Heart right ventricle (tissue), 16 donors: ENCODE measurements at regions of chr15 and their contacts with region 1.

Region 1: DNA sequence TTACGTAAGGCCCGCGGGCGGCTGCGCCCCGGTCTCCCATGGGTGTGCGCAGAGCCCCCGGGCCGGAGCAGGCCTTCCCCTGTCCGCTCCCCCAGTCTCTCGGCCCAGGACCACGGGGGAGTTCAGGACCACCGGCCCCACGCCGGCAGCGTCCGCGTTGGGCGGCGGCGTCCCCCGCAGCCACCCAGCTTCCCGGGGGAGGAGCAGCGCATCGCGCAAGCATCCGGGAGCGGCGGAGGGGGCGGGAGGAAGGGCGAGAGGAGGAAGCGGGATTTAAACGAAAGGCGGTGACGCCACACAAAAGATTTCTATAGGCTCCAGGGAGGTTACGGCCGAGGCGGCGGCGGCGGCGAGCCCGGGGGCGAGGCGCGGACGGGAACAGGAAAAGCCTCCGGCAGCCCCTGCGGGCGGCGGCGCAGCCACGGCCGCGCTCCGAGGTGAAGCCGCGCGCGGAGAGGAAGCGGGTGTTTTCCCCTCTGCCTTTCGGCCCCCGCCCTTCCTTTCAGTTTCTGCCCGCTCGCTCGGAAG is at the start of gene TLNRD1:
- DNase-seq: peak; percentile 88 to 93
- ATAC-seq: peak; percentile 81 to 93 (median 84)
- H3K4me3 ChIP-seq: peak within 1 kb of the TSS; percentile 34 to 98 (median 88)
- H3K27ac ChIP-seq: peak within 1 kb of the TSS; percentile 93 to 100 (median 99)
- H3K4me1 ChIP-seq: peaks cover 3 to 56% (median 42%) of the 10 kb centered on the region in 9 donors
- H3K27me3 ChIP-seq: no peaks in the 10 kb centered on the region
- CTCF ChIP-seq: peak in 1 of 9 donors; percentile 6
- total RNA-seq, gene TLNRD1: 4.3 to 19.4 (median 6.3) TPM

Region 2: DNA sequence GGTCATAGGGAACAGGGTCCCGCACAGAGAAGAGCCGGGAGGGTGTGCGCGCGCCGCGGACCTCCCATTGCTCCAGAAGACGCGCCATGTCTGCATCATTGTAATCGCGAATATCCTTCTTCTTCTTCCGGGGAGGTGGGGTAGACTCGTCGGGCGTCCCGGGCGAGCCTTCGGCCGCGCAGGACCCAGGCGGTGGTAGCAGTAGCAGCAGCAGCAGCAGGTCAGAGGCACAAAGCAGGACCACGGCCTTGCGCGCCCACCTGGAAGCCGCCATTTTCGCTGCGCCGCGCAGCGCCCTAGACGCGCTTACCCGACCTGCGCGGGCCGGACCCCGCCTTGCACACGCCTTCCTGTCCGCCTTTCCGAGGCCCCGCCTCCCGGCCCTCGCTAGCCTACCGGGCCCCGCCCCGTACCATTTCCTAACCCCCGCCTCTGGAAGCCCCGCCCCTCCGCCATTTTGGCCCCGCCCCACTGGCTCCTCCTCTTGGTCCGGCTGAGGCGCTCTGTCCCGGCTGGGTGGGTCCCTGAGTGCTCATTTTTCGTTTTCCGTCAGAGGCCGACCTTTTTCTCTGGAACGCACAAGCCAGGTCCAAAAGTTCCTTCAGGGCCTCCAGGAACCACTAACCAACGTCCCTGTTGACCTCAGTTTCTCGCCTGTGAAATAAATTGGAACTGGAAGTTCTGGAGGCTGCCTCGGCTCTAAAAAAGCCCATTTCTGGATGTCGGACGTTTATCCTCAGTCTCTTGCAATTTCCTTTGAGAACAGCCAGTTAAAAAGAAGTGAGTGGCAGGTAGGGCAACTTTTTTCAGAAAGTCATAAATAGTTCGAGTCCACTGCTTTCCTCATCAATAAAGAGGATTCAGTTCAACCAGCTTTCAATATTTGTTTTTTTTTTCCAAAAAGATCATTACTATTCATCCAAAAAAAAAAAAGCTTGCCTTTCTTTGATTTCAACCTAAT is 10.9 kb before region 1 on chr15 and contains the start of gene MESD:
- intact Hi-C with region 1: loop called in 1 of 10 experiments (anchors 1 kb)
- DNase-seq: peak; percentile 98 to 100
- ATAC-seq: peak; percentile 98 to 99 (median 99)
- H3K4me3 ChIP-seq: peak within 1 kb of the TSS; percentile 64 to 97 (median 80)
- H3K27ac ChIP-seq: peak within 1 kb of the TSS; percentile 84 to 94 (median 91)
- H3K4me1 ChIP-seq: peaks cover 3 to 70% (median 63%) of the 10 kb centered on the region in 9 donors
- H3K27me3 ChIP-seq: no peaks in the 10 kb centered on the region
- CTCF ChIP-seq: no peak
- total RNA-seq, gene MESD: 11.1 to 17.6 (median 15.2) TPM

Region 3: DNA sequence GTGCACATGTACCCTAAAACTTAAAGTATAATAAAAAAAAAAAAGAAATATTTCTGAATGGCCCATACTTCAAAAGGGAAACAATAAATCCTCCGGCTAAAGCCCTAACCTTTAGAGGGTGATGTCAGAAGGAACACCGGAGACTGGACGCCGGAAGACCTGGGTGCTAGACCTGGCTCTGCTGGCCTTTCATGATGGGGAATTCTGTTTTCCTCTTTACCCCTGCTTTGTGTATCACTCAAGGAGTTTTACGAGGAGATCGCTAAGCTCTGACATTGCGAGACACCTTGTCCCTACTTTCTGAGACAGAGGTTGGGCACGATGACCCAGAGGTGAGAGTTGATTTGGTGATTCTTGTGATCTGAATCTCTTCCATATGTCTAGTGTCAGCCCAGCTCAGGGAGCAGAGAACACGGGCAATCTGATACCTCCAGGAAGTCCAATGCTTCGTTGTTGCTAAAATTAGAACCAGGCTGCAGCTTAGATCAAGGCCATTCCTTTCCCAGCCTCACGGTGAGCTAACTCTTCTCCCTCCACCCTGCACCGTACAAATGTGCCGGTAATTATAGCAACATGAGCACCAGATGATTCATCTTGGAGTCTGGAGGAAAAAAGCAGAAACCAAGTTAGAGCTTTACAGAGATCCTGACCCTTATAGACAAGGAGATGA is 91.3 kb after region 1 on chr15:
- intact Hi-C with region 1: loop called in 5 of 10 experiments (anchors 2 to 10 kb)
- DNase-seq: peak in 1 of 2 donors; percentile 54
- ATAC-seq: peak; percentile 66 to 96 (median 90)
- H3K4me3 ChIP-seq: peak overlapping the region in 4 of 10 donors; percentile 9 to 29 (median 19)
- H3K27ac ChIP-seq: peak overlapping the region; percentile 2 to 78 (median 69)
- H3K4me1 ChIP-seq: peaks cover 3 to 38% (median 27%) of the 10 kb centered on the region in 9 donors
- H3K27me3 ChIP-seq: no peaks in the 10 kb centered on the region
- CTCF ChIP-seq: no peak

Region 4: DNA sequence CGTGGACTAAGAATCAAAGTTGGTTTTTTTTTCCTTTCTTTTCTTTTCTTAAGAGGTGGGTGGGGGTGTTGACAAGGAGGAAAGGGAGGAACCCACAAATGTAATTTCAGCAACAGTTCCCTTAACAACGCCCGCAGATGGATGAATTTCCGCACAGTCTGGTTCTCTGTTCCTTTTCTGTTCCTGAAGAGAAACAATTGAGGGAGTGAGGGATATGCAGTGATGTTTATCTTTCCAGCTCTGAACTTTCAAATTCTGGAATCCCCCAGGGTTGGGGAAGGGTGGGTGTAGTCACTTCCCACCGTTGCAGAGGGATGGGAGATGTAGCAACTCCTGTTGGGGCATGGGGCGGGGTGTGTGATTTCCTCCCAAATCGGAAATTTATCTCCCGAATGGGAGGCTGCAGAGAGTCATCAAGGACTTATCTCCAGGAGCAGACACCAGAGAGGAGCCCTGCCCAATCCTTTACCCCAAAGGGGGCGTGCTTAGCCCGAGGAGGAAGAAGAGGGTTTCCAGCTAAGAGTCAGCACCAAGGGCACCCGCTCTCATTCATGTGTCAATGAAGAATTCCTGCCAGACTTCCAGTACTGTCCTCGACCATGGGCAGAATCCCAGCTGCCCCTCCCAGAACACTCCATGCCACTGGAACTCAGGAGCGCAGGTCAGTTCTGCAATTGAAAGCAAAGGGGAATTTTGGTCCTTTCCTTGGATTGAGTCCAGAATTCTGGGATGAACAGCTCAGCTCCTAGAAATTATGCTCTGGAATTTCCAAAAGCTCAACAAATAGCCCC is 98.4 kb after region 1 on chr15:
- intact Hi-C with region 1: loop called in 9 of 10 experiments (anchors 1 to 10 kb)
- DNase-seq: peak; percentile 44 to 75
- ATAC-seq: peak; percentile 74 to 91 (median 85)
- H3K4me3 ChIP-seq: peak overlapping the region in 7 of 10 donors; percentile 4 to 28 (median 13)
- H3K27ac ChIP-seq: peak overlapping the region in 9 of 10 donors; percentile 27 to 81 (median 62)
- H3K4me1 ChIP-seq: peaks cover 0 to 58% (median 31%) of the 10 kb centered on the region in 9 donors
- H3K27me3 ChIP-seq: no peaks in the 10 kb centered on the region
- CTCF ChIP-seq: no peak

Region 5: GRCh38 chr15:81106560-81106959 is 105.9 kb after region 1 on chr15:
- intact Hi-C with region 1: loop called in 2 of 10 experiments (anchors 10 kb)
- DNase-seq: peak in 1 of 2 donors; percentile 47
- ATAC-seq: peak; percentile 57 to 87 (median 70)
- H3K4me3 ChIP-seq: no peak overlapping the region
- H3K27ac ChIP-seq: no peak overlapping the region
- H3K4me1 ChIP-seq: peaks cover 0 to 21% (median 2%) of the 10 kb centered on the region in 9 donors
- H3K27me3 ChIP-seq: no peaks in the 10 kb centered on the region
- CTCF ChIP-seq: peak; percentile 51 to 88 (median 78)

Region 6: GRCh38 chr15:81265944-81266775 is 265.5 kb after region 1 on chr15:
- intact Hi-C with region 1: loop called in 4 of 10 experiments (anchors 5 kb)
- DNase-seq: peak; percentile 80 to 81
- ATAC-seq: peak; percentile 87 to 96 (median 94)
- H3K4me3 ChIP-seq: peak overlapping the region in 2 of 10 donors; percentile 27 to 29
- H3K27ac ChIP-seq: no peak overlapping the region
- H3K4me1 ChIP-seq: peaks cover 0 to 30% (median 15%) of the 10 kb centered on the region in 9 donors
- H3K27me3 ChIP-seq: peaks cover 0 to 6% (median 0%) of the 10 kb centered on the region in 7 donors
- CTCF ChIP-seq: peak; percentile 81 to 93 (median 86)